Prostate gland (tissue), 2 donors: ENCODE measurements at regions of chr3 and their contacts with region 1.

Region 1: DNA sequence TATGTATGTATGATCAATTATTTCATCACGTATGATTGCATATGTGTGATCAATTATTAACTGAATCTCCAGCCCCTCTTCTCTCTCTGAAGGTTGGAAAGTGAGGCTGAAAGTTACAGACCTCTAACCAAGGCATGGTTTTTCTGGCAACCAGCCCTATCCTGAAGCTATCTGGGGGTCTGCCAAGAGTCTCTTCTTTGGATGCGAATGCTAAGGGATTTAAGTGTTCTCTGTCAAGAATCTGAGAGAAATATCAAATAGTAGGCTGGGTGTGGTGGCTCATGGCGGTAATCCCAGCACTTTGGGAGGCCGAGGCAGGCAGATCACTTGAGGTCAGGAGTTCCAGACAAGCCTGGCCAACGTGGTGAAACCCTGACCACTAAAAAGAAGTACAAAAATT is 8.1 kb downstream of the NKTR start:
- DNase-seq: no peak
- H3K4me3 ChIP-seq: no peak overlapping the region
- H3K27ac ChIP-seq: no peak overlapping the region
- H3K4me1 ChIP-seq: no peaks in the 10 kb centered on the region
- H3K27me3 ChIP-seq: no peaks in the 10 kb centered on the region
- CTCF ChIP-seq: no peak
- POLR2A ChIP-seq: no peak

Region 2: DNA sequence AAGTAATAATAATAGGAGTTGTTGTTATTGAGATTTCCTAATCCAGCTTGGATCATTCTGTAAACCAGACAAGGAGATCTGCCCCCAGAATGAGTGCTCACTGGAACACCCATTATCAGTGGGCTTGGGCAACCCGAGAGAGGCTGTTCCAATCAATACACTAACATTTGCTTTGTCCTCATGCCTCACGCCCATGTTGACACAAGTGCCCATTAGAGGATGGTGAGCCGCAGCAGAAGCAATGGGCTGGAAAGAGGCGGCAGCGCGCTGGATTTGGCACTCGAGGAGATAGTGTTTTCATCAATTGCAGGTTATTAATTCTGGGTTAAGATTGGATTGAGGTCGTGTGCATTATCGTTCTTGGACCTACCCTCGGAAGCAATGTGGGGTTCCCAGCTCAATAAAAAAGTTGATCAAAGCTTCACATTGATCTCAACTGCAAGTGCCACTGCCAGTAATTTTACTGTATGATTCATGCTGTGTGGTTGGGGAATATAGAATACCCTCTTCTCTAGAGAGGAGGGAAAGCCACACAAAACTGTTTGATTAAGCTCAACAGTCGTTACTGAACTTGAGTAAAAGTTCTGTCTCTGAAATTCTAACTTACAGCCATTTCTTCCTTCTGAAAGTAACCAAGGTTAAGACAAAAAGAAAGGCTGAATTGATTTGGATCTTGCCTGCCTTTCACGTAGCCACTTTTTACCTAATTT is 213.8 kb before region 1 on chr3:
- intact Hi-C with region 1: no loop called
- DNase-seq: no peak
- H3K4me3 ChIP-seq: no peak overlapping the region
- H3K27ac ChIP-seq: no peak overlapping the region
- H3K4me1 ChIP-seq: no peaks in the 10 kb centered on the region
- H3K27me3 ChIP-seq: no peaks in the 10 kb centered on the region
- CTCF ChIP-seq: no peak
- POLR2A ChIP-seq: no peak

Region 3: DNA sequence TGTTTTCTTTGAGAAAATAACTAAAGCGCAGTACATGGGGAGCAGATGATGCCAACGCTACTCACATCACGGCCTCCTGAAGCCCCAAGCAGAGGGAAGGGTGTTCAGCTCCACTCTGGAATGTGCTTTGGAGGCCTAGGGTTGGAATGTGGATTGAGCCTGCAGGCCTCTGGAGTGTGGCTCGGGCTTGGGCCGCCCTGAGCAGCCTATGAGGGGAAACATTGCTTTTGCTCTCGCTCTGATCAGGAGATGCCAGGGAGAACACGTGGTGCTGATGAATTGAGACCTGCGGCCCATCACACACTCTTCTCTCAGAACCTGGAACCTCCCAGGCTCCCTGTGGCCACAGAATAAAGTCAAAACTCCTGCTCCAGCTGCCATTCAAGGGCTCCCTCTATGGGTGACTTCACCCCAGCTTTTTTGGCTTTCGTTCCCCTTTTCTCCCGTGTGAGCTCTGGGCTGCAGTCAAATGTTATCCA is 141.2 kb after region 1 on chr3:
- intact Hi-C with region 1: loop called (anchors 5 kb)
- DNase-seq: no peak
- H3K4me3 ChIP-seq: no peak overlapping the region
- H3K27ac ChIP-seq: peak overlapping the region; percentile 1 to 2
- H3K4me1 ChIP-seq: peaks cover 14% of the 10 kb centered on the region
- H3K27me3 ChIP-seq: no peaks in the 10 kb centered on the region
- CTCF ChIP-seq: peak in 2 of 4 experiments; percentile 28 to 32
- POLR2A ChIP-seq: no peak